PC-3 (cell line): ENCODE measurements at regions of chr10 and their contacts with region 1.

Region 1: GRCh38 chr10:72319416-72320254 is 35.1 kb downstream of the DNAJB12 start:
- DNase-seq: peak; percentile 86
- ATAC-seq: peak; percentile 45
- H3K4me3 ChIP-seq: peak overlapping the region; percentile 53; the same call in 1 of the 2 replicates
- H3K27ac ChIP-seq: peak overlapping the region; percentile 85
- H3K4me1 ChIP-seq: peaks cover 65% of the 10 kb centered on the region
- H3K27me3 ChIP-seq: no peaks in the 10 kb centered on the region
- CTCF ChIP-seq: no peak

Region 2: DNA sequence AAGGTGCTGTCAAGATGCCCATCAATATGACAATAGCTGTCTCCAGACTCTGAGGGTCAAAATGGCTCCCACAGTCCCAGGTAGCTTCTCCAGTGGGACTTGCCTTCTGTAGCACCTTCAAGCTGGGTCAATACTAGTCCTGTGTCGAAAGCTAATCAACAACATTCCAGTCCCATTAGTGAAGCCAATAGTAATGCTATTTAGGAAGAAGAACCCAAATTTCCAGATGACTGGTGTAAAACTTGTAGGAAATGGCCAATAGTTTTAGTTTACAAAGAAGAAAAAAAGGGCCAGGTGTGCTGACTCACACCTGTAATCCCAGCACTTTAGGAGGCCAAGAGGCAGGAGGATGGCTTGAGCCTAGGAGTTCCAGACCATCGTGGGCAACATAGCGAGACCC is 229.3 kb before region 1 on chr10:
- CTCF ChIA-PET with region 1: no interaction called
- POLR2A ChIA-PET with region 1: interaction called, 11 read pairs
- intact Hi-C with region 1: no loop called
- DNase-seq: peak; percentile 18
- ATAC-seq: no peak
- H3K4me3 ChIP-seq: no peak overlapping the region
- H3K27ac ChIP-seq: no peak overlapping the region
- H3K4me1 ChIP-seq: no peaks in the 10 kb centered on the region
- H3K27me3 ChIP-seq: no peaks in the 10 kb centered on the region
- CTCF ChIP-seq: no peak

Region 3: DNA sequence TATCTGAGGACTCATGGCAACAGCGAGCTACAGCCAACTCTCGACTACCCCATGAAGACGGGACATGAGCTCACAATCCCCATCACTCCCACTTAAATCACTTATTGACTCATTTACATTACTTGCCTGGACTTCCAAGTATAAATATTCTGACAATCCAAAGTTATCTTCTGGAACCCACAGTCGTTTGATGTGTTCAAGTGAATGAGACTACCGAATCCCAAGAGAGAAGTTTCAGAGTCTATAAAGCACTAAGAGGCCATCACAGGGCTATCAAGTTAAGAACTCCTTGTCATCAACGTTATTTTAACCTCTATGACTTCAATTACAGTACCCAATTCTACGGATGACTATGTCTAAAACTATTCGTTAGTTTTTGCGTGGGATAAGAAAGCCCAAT is 115.3 kb before region 1 on chr10:
- CTCF ChIA-PET with region 1: no interaction called
- POLR2A ChIA-PET with region 1: no interaction called
- intact Hi-C with region 1: no loop called
- DNase-seq: no peak
- ATAC-seq: no peak
- H3K4me3 ChIP-seq: no peak overlapping the region
- H3K27ac ChIP-seq: no peak overlapping the region
- H3K4me1 ChIP-seq: no peaks in the 10 kb centered on the region
- H3K27me3 ChIP-seq: no peaks in the 10 kb centered on the region
- CTCF ChIP-seq: no peak

Region 4: DNA sequence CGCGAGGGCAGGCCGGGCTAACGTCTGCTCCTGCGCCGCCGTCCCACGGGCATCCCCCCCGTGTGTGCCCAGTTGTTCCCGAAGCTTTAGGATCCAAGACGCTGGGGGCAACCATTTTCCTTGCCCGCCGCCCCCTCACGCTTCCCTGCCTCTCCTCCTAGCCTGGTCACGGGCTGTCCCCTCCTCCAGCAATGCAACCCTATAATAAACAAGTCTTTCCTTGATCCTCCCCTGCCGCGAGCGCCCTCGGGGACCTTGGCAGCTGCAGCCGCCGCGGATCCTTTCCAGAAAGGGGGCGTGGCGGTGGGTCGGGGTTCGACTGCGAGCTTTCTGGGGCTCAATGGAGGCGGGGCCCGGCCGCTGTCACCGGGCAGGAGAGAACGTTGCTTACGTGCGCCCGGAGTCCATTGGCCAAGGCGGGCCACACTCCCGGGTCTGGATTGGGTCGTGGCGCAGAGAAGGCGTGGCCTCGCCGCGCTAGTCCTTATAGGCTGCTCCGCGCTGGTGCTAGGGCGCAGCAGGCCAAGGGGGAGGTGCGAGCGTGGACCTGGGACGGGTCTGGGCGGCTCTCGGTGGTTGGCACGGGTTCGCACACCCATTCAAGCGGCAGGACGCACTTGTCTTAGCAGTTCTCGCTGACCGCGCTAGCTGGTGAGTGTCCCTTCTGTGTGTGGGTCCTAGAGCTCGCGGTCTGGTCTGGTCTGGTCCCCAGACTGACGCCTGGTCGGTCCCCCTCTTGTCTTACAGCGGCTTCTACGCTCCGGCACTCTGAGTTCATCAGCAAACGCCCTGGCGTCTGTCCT is 46.0 kb before region 1 on chr10 and contains the start of gene DDIT4:
- CTCF ChIA-PET with region 1: no interaction called
- POLR2A ChIA-PET with region 1: interaction called, 8 read pairs
- intact Hi-C with region 1: loop called (anchors 1 kb)
- DNase-seq: peak; percentile 96
- ATAC-seq: peak; percentile 85
- H3K4me3 ChIP-seq: peak within 1 kb of the TSS; percentile 75
- H3K27ac ChIP-seq: peak within 1 kb of the TSS; percentile 41
- H3K4me1 ChIP-seq: peaks cover 32% of the 10 kb centered on the region
- H3K27me3 ChIP-seq: no peaks in the 10 kb centered on the region
- CTCF ChIP-seq: no peak
- total RNA-seq, gene DDIT4: 68.9 and 94.2 TPM in 2 replicates